ENCODE measurements at regions of chrX and their contacts with region 1.

Region 1: GRCh38 chrX:480861-481417 is 94.2 kb upstream of the PPP2R3B start:
- DNase-seq: no peak

Region 2: DNA sequence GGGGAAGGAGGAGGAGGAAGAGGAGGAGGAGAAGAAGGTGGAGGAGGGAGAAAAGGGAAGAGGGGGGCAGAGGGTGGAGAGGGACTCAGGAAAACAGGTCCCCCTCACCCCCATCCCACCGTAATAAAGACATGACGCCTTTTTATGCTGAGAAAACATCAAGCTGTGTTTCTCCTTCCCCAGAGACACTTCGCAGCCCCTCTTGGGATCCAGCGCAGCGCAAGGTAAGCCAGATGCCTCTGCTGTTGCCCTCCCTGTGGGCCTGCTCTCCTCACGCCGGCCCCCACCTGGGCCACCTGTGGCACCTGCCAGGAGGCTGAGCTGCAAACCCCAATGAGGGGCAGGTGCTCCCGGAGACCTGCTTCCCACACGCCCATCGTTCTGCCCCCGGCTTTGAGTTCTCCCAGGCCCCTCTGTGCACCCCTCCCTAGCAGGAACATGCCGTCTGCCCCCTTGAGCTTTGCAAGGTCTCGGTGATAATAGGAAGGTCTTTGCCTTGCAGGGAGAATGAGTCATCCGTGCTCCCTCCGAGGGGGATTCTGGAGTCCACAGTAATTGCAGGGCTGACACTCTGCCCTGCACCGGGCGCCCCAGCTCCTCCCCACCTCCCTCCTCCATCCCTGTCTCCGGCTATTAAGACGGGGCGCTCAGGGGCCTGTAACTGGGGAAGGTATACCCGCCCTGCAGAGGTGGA is 104.3 kb after region 1 on chrX:
- in situ Hi-C with region 1: no loop called
- DNase-seq: no peak

Region 3: DNA sequence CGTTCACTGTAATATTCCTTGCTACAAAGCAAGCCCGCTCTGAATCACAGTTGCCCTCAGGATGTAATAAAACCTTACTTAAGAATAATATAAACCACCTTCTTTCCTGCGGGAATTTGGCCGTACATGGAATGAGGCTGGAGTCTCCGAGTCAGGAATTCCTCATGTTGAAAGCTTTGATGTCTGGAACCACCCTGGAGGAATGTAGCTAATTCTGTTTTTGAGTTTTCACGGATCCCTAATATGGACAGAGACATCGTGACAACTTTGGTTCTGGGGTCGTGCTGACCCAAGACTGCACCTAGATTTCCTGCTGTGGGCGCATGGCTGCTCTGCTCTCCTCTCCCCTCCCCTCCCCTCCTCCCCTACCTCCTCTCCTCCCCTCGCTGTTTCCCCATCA is 673.1 kb after region 1 on chrX:
- in situ Hi-C with region 1: loop called (anchors 10 kb)
- DNase-seq: no peak